Mucosa of descending colon (tissue), 3 donors: ENCODE measurements at regions of chr10 and their contacts with region 1.

Region 1: GRCh38 chr10:110871298-110872084 is at the start of gene PDCD4:
- DNase-seq: peak; percentile 99 to 100 (median 100)
- ATAC-seq: peak; percentile 90
- H3K4me3 ChIP-seq: peak within 1 kb of the TSS; percentile 90
- H3K4me1 ChIP-seq: peaks cover 42% of the 10 kb centered on the region
- CTCF ChIP-seq: peak; percentile 6
- total RNA-seq, gene PDCD4: 290 to 605 (median 528) TPM

Region 2: GRCh38 chr10:110803830-110804338 is 67.6 kb before region 1 on chr10:
- intact Hi-C with region 1: loop called in 1 of 2 experiments (anchors 10 kb)
- DNase-seq: peak; percentile 58 to 79 (median 72)
- ATAC-seq: peak; percentile 80
- H3K4me3 ChIP-seq: no peak overlapping the region
- H3K4me1 ChIP-seq: peaks cover 19% of the 10 kb centered on the region
- CTCF ChIP-seq: peak; percentile 27

Region 3: GRCh38 chr10:110820321-110820814 is 51.1 kb before region 1 on chr10:
- intact Hi-C with region 1: loop called in 1 of 2 experiments (anchors 10 kb)
- DNase-seq: peak in 1 of 3 donors; percentile 45
- ATAC-seq: peak; percentile 3
- H3K4me3 ChIP-seq: no peak overlapping the region
- H3K4me1 ChIP-seq: peaks cover 31% of the 10 kb centered on the region
- CTCF ChIP-seq: no peak

Region 4: DNA sequence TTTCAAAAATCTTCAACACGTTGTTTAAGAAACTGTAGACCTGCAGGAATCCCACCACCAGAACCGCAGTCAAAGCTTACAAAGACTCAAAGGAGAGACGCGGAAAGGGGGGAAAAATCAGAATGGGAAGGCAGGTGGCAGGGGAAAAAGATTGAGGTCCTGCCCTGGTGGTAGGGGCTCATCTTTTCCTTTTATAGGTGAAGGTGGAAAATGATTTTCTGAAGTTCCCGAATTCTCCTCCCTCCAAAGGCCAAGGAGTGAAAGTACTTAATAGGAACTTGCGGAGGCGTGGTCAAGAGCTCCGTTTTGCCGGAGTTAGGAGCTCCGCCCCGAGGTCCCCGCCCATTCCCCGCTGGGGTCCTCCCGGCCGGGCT is 46.8 kb after region 1 on chr10:
- intact Hi-C with region 1: no loop called
- DNase-seq: peak; percentile 97 to 98 (median 97)
- ATAC-seq: no peak
- H3K4me3 ChIP-seq: peak overlapping the region; percentile 55
- H3K4me1 ChIP-seq: peaks cover 17% of the 10 kb centered on the region
- CTCF ChIP-seq: no peak